ENCODE measurements at regions of chr3 and their contacts with region 1.

Region 1: GRCh38 chr3:47261301-47261700 is 21.3 kb downstream of the KIF9 start:
- DNase-seq: no peak
- H3K4me3 ChIP-seq: no peak overlapping the region
- CTCF ChIP-seq: no peak

Region 2: DNA sequence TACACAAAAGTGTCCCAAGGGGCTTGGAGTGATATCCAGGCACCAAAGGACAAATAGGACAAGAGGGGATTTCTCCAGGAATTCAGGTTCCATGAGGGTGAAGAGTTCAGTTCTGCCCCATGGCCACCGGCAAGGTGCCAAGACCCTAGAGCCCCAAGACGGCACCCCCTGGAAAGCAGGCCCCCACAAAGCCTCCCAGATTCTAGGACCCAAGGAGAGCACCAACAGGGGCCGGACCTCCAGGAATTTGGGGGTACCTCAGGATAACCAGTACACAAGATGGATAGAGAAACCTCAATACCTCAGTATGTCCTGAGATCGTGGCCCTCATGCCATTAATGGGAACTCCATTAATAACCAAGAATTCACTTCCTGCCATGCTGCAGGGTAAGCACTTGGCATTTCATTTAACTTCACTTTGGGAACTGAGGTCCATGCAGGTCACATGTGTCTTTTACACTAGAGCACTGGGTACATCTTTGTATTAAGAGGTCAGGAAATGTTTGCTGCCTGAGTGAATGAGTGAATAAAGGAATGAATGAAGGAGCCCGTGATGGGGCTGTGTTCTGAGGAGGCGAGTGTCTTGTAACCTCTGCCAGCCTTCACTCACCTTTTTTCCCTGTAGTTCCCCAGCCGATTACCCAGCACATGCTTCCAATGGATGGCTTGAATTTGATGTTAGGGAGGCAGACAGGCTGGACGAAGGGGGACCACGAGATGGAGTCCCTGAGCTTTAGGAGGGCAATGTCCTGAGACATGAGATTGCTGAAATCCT is 528.1 kb before region 1 on chr3:
- CTCF ChIA-PET with region 1: no interaction called
- POLR2A ChIA-PET with region 1: no interaction called
- DNase-seq: no peak
- H3K4me3 ChIP-seq: no peak overlapping the region
- CTCF ChIP-seq: no peak

Region 3: GRCh38 chr3:47250309-47251060 is 10.8 kb before region 1 on chr3:
- CTCF ChIA-PET with region 1: interaction called, 10 read pairs
- POLR2A ChIA-PET with region 1: no interaction called
- DNase-seq: no peak
- H3K4me3 ChIP-seq: no peak overlapping the region
- CTCF ChIP-seq: peak; percentile 16

Measured in AG04449 (cell line).